Right cardiac atrium (tissue), 5 donors: ENCODE measurements at regions of chr9 and their contacts with region 1.

Region 1: GRCh38 chr9:83334320-83334719 is 203.9 kb downstream of the FRMD3 start:
- DNase-seq: peak; percentile 78 to 90 (median 90)
- ATAC-seq: peak; percentile 92 to 95
- H3K4me3 ChIP-seq: no peak overlapping the region
- H3K27ac ChIP-seq: no peak overlapping the region
- H3K4me1 ChIP-seq: no peaks in the 10 kb centered on the region
- H3K27me3 ChIP-seq: no peaks in the 10 kb centered on the region

Region 2: GRCh38 chr9:83538172-83538889 is 204.0 kb after region 1 on chr9 and contains the start of gene FRMD3:
- intact Hi-C with region 1: loop called in 3 of 4 experiments (anchors 5 to 10 kb)
- DNase-seq: peak; percentile 87 to 95 (median 93)
- ATAC-seq: peak; percentile 97 to 98
- H3K4me3 ChIP-seq: peak within 1 kb of the TSS; percentile 30
- H3K27ac ChIP-seq: peak within 1 kb of the TSS; percentile 40
- H3K4me1 ChIP-seq: peaks cover 4% of the 10 kb centered on the region
- H3K27me3 ChIP-seq: no peaks in the 10 kb centered on the region
- total RNA-seq, gene FRMD3: 34.3 to 75.1 (median 60.6) TPM

Region 3: GRCh38 chr9:83544002-83544698 is 209.8 kb after region 1 on chr9:
- intact Hi-C with region 1: loop called in 3 of 4 experiments (anchors 5 to 10 kb)
- DNase-seq: peak in 2 of 3 donors; percentile 42 to 58
- ATAC-seq: peak; percentile 87 to 96
- H3K4me3 ChIP-seq: no peak overlapping the region
- H3K27ac ChIP-seq: no peak overlapping the region
- H3K4me1 ChIP-seq: peaks cover 2% of the 10 kb centered on the region
- H3K27me3 ChIP-seq: no peaks in the 10 kb centered on the region

Region 4: GRCh38 chr9:84600739-84601138 is 1266.4 kb after region 1 on chr9:
- intact Hi-C with region 1: no loop called
- DNase-seq: no peak
- ATAC-seq: no peak
- H3K4me3 ChIP-seq: no peak overlapping the region
- H3K27ac ChIP-seq: no peak overlapping the region
- H3K4me1 ChIP-seq: no peaks in the 10 kb centered on the region
- H3K27me3 ChIP-seq: no peaks in the 10 kb centered on the region